A673 (cell line): ENCODE measurements at regions of chr7 and their contacts with region 1.

Region 1: DNA sequence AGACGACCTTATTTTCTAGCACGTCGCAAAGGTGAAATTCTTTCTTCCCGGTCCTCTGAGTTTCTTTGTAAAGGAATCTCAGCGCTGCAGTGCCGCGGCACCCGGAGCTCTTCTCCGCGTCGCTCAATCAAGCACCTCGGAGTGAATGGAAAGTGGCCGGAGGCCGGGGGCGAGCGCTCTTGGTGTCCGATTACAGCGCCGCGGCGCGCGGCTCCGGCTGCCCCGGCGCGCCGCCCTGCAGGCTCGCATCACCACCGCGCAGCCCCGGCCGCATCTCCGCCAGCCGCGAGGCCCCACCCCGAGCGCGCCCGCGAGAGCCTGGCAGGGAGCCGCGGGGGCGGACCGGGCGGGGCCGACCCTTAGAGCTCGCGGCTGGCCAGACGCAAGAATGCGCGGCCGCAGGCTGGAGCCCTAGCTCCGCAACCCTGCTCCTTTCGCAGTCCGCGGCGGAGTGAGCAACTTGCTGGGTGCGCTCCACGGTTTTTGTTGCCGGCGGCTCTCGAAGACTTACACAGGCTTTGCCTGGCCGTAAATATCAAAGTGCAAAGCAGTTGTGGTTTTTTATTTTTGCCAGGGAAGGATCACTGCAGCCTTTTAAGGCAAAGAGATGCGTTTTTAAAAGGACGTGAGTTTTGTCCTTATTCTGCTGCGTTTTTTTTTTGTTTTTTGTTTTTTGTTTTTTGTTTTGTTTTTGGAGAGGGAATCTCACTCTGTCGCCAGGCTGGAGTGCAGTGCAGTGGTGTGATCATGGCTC is at the start of gene SEMA3C:
- DNase-seq: peak; percentile 84
- H3K4me3 ChIP-seq: peak within 1 kb of the TSS; percentile 60
- H3K27ac ChIP-seq: peak within 1 kb of the TSS; percentile 34
- H3K4me1 ChIP-seq: peaks cover 18% of the 10 kb centered on the region
- H3K27me3 ChIP-seq: no peaks in the 10 kb centered on the region
- CTCF ChIP-seq: no peak
- total RNA-seq, gene SEMA3C: 12.4 and 13.3 TPM in 2 replicates

Region 2: GRCh38 chr7:80622541-80622940 is 296.5 kb before region 1 on chr7:
- CTCF ChIA-PET with region 1: no interaction called
- POLR2A ChIA-PET with region 1: no interaction called
- intact Hi-C with region 1: no loop called
- DNase-seq: no peak
- H3K4me3 ChIP-seq: no peak overlapping the region
- H3K27ac ChIP-seq: no peak overlapping the region
- H3K4me1 ChIP-seq: no peaks in the 10 kb centered on the region
- H3K27me3 ChIP-seq: no peaks in the 10 kb centered on the region
- CTCF ChIP-seq: no peak

Region 3: DNA sequence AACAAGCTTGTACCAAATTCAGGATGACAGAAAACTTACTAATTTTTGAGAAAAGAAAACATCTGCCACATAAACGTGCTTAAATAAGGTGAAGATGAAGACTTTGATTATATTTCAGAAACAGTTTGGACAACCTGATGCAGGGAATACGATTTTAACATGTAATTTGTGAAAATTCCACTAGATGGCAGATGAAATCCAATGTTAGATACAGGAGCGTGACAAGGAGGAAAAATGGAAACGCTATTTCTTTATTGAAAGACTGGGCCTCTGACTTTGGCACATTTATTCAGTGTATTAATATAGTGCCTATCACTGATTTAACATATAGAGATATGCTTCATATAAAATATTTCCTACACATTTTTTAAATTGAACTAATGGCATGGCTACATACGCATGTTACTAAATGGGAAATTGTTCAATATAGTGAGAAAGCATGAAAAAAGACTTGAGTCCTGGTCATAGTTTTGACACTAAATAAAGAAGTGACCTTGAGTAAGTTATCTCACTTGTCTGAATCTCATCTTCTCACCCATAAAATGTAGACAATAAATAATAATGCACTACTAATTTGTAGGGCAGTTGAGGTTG is 219.9 kb before region 1 on chr7:
- CTCF ChIA-PET with region 1: no interaction called
- POLR2A ChIA-PET with region 1: no interaction called
- intact Hi-C with region 1: loop called (anchors 2 kb)
- DNase-seq: peak; percentile 76
- H3K4me3 ChIP-seq: no peak overlapping the region
- H3K27ac ChIP-seq: no peak overlapping the region
- H3K4me1 ChIP-seq: no peaks in the 10 kb centered on the region
- H3K27me3 ChIP-seq: no peaks in the 10 kb centered on the region
- CTCF ChIP-seq: peak; percentile 65

Region 4: DNA sequence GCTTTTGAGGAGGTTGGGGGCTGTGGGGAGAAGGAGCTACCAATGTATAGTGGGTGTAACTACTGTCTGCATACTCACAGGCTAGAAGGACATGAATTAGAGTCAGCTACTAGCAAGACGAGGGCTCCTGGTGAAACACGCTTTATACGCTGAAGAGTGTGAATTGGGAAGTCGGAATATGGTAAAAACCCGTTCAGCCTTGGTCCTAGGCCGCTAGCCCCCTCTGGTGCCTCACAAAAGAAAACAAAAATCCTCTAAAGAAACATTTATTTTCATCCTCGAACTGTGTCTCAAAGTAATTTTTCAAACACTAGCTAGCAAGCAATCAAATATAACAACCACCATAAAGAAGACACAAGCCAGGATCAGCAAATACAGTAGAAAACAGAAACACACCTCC is 337.9 kb after region 1 on chr7:
- CTCF ChIA-PET with region 1: no interaction called
- POLR2A ChIA-PET with region 1: no interaction called
- intact Hi-C with region 1: loop called (anchors 5 kb)
- DNase-seq: peak; percentile 56
- H3K4me3 ChIP-seq: no peak overlapping the region
- H3K27ac ChIP-seq: no peak overlapping the region
- H3K4me1 ChIP-seq: no peaks in the 10 kb centered on the region
- H3K27me3 ChIP-seq: no peaks in the 10 kb centered on the region
- CTCF ChIP-seq: peak; percentile 55

Region 5: GRCh38 chr7:81447351-81447952 is 528.4 kb after region 1 on chr7:
- CTCF ChIA-PET with region 1: no interaction called
- POLR2A ChIA-PET with region 1: no interaction called
- intact Hi-C with region 1: loop called (anchors 1 kb)
- DNase-seq: peak; percentile 69
- H3K4me3 ChIP-seq: no peak overlapping the region
- H3K27ac ChIP-seq: no peak overlapping the region
- H3K4me1 ChIP-seq: no peaks in the 10 kb centered on the region
- H3K27me3 ChIP-seq: no peaks in the 10 kb centered on the region
- CTCF ChIP-seq: peak; percentile 64

Region 6: DNA sequence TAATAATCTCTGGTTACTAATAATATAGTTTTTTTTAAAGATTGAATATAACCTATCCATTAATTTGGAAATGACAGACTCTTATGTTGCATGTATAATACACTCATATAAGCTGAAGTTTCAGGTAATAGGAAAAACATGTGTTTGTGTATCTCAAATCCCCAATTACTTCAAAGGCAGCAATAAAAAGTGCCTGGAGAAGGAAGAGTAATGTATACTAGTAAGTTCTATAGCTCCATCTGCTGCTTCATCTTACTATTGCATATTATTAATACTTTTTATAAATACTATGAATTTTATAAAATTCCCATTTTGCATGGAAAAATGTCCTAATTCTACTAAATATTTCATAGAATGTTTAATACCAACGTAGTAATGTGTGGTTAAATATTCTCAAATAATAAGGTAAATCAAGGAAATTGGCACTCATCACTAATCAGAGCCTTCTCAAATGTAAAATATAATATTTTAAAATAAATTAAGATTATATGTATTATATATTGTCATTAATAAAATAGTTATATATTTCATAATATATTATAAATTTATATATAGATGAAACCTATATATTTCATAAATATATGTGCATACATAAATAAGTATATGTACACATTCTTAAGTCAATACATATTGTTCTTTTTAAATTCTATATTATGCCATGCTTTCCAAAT is 538.9 kb after region 1 on chr7:
- CTCF ChIA-PET with region 1: no interaction called
- POLR2A ChIA-PET with region 1: no interaction called
- intact Hi-C with region 1: loop called (anchors 5 kb)
- DNase-seq: peak; percentile 63
- H3K4me3 ChIP-seq: no peak overlapping the region
- H3K27ac ChIP-seq: no peak overlapping the region
- H3K4me1 ChIP-seq: no peaks in the 10 kb centered on the region
- H3K27me3 ChIP-seq: no peaks in the 10 kb centered on the region
- CTCF ChIP-seq: peak; percentile 50; the same call in 1 of the 2 replicates

Region 7: DNA sequence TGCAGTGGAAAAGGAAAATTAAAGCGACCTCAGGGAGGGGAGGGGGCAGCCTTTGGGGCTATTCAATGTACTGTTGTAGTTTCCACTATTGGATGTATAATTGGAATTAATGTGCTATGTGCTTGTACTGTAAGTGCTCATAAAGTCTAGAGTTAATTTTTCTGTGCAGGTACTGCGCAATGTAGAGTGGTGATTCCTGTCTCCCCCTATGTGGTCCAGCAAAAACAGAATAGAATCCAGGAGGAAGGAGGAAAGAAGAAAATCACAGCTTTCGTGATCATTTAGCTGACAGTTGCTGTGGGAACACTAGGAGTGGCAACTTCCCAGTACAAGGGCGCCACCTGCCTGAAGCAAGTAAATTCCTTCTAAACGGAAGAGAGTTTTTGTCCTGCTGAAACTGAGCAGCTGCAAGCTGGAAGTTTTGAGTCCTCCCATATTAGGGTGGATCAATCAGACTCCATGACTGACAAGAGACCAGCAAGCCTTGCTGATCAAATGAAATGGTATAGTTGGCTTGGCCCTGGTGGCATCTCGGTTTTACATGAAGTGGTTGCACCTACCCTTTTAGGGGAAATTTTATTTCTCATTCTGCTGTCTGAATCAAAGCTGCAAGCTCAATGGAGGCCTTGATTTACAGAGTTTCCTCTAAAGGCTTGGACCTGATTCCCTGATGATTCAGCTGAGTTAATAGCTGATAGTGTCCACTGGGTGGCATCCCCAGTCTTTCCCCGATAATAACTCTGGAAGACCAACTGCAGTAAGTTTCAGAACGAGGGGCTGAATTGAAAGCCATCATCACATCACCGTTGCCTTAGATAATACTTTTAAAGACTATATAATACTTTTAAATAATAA is 551.0 kb after region 1 on chr7:
- CTCF ChIA-PET with region 1: interaction called, 7 read pairs
- POLR2A ChIA-PET with region 1: no interaction called
- intact Hi-C with region 1: loop called (anchors 5 kb)
- DNase-seq: peak; percentile 80
- H3K4me3 ChIP-seq: no peak overlapping the region
- H3K27ac ChIP-seq: no peak overlapping the region
- H3K4me1 ChIP-seq: no peaks in the 10 kb centered on the region
- H3K27me3 ChIP-seq: no peaks in the 10 kb centered on the region
- CTCF ChIP-seq: peak; percentile 78